Tibial artery (tissue), 4 donors: ENCODE measurements at regions of chr2 and their contacts with region 1.

Region 1: DNA sequence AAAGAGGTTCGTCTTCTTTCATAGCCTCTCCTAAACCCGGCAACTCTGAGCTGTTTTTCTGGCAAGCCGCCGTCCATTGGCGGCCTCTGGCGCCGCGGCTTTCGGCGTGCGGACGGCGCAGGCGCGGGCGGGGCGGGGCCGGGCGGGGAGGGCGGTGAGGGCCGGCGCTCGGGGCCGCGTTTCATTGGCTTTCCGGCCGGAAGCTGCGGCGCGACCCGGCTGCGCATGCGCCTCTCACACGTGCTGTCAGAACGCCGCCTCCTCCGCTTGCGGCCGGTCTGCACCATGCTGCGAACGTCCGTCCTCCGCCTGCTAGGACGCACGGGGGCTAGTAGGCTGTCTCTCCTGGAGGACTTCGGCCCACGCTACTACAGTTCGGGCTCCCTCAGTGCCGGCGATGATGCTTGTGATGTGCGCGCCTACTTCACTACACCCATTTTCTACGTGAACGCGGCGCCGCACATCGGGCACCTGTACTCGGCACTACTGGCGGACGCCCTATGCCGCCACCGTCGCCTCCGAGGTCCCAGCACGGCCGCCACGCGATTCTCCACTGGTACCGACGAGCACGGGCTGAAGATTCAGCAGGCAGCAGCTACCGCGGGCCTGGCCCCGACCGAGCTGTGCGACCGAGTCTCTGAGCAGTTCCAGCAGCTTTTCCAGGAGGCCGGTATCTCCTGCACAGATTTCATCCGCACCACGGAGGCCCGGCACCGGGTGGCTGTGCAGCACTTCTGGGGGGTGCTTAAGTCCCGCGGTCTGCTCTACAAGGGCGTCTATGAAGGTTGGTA is at the start of gene MARS2:
- DNase-seq: peak; percentile 83 to 96
- H3K4me3 ChIP-seq: peak within 1 kb of the TSS; percentile 89
- H3K27ac ChIP-seq: peak within 1 kb of the TSS; percentile 70 to 76
- H3K4me1 ChIP-seq: peaks cover 0 to 42% (median 26%) of the 10 kb centered on the region in 4 donors
- H3K27me3 ChIP-seq: no peaks in the 10 kb centered on the region
- CTCF ChIP-seq: no peak

Region 2: DNA sequence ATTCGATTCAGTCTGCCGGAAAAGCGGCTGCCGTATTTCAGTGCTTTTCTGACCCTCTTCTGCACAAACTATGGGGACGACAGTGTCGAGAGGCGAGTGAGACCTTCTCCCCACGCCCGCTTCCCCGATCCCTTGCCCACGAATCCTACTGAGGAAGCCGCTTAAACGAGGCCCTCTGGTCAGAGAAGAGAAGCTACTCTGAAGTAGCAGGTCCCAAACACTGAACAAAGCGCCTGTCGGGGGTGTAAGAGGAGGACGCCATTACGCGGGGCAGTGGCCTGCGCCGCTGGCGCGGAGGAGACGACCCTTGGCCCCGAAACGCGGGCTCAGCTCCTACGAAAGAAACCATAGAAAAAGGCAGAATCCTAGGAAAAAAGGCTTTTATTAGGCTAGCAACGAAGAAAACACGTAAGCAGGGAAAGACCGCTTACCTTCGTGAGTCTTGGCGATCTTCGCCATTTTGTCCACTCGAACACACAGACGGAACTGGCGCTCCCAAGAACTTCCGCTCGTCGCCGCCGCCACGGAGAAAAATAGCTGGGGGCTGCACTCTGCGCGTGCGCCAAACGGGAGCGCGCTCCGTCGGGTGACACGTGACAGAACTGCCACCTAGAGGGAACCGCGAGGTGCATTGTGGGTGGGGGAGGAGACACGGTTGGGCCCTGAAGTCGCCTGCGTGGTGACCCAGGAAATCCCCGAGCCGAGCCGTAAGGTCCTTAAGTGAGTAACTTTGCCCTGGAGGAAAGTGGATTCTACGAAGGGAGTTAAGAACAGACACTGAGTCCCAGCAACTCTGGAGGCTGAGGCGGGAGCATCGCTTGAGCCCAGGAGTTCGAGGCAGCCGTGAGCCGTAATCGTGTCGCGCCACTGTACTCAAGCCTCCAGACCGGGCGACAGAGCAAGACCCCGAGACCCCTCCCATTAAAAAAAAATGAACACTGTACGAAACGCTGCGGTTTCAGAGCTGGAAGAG is 270.5 kb before region 1 on chr2 and contains the start of gene SF3B1:
- intact Hi-C with region 1: loop called (anchors 10 kb)
- DNase-seq: peak; percentile 98 to 99
- H3K4me3 ChIP-seq: peak within 1 kb of the TSS; percentile 98 to 99
- H3K27ac ChIP-seq: peak within 1 kb of the TSS; percentile 98
- H3K4me1 ChIP-seq: peaks cover 0 to 52% (median 38%) of the 10 kb centered on the region in 4 donors
- H3K27me3 ChIP-seq: no peaks in the 10 kb centered on the region
- CTCF ChIP-seq: no peak

Region 3: DNA sequence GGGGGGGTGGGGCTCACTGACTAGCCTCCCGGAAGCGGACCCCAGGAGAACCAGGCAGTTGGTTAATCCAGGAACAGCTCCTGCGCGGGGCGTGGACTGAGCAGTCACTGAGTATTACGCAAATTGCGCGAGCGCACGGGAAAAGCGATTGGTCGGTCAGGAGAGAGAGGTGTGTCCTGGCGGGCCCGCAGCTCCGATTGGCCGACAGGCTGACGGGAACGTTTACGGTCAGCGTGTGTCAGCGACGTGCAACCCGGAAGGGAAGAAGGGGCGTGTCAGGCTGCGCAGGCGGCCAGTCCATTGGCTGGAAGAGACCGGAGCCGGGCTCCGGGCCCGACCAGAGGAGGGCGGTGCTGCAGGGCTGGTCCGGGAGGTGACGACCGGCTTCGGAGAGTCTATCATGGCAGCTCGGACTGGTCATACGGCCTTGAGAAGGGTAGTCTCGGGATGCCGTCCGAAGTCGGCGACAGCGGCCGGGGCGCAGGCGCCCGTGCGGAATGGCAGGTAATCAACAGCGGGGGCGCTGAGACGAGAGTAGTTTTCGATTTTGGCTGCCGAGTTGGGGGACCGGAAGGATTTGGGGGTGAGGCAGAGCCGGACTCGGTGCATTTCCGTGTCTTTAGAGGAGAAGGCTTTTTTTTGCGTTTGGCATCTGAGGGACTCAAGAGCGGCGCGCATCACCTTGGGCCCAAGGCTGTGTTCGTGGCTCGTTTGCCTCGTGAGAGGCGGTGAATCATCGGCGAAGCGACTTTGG is 252.0 kb before region 1 on chr2 and contains the start of gene COQ10B:
- intact Hi-C with region 1: loop called (anchors 5 kb)
- DNase-seq: peak; percentile 99 to 100
- H3K4me3 ChIP-seq: peak within 1 kb of the TSS; percentile 87 to 96
- H3K27ac ChIP-seq: peak within 1 kb of the TSS; percentile 99 to 100
- H3K4me1 ChIP-seq: peaks cover 0 to 38% (median 18%) of the 10 kb centered on the region in 4 donors
- H3K27me3 ChIP-seq: no peaks in the 10 kb centered on the region
- CTCF ChIP-seq: peak in 1 of 2 experiments; percentile 22

Region 4: GRCh38 chr2:197515739-197516392 is 189.4 kb before region 1 on chr2 and contains the start of gene MOB4:
- intact Hi-C with region 1: loop called (anchors 2 kb)
- DNase-seq: peak; percentile 93 to 98
- H3K4me3 ChIP-seq: peak within 1 kb of the TSS; percentile 90 to 93
- H3K27ac ChIP-seq: peak within 1 kb of the TSS; percentile 92 to 94
- H3K4me1 ChIP-seq: peaks cover 0 to 37% (median 14%) of the 10 kb centered on the region in 4 donors
- H3K27me3 ChIP-seq: no peaks in the 10 kb centered on the region
- CTCF ChIP-seq: no peak

Region 5: DNA sequence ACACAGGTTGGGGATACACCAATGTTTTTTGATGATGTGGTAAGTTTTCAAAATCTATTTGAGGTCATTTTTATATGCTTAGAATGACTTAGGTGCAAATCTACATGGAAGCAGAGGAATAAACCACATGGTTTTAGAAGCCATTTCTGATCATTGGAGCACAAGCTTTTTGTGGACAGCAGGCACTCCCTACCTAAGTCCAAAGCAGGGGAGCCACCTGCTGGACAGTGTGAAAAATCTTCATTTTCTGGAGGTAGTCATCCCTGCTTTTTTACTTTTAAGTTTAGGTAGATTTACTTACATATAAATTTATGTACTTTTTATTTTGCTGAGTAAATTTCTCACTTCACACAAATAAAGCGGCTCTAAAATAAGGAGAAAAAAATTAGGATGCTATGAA is 422.3 kb after region 1 on chr2:
- intact Hi-C with region 1: loop called (anchors 10 kb)
- DNase-seq: peak in 1 of 2 donors; percentile 28
- H3K4me3 ChIP-seq: no peak overlapping the region
- H3K27ac ChIP-seq: no peak overlapping the region
- H3K4me1 ChIP-seq: peaks cover 0 to 9% (median 0%) of the 10 kb centered on the region in 4 donors
- H3K27me3 ChIP-seq: no peaks in the 10 kb centered on the region
- CTCF ChIP-seq: peak; percentile 61 to 76